Left ventricle myocardium superior (tissue), 1 donor: ENCODE measurements at regions of chr11 and their contacts with region 1.

Region 1: DNA sequence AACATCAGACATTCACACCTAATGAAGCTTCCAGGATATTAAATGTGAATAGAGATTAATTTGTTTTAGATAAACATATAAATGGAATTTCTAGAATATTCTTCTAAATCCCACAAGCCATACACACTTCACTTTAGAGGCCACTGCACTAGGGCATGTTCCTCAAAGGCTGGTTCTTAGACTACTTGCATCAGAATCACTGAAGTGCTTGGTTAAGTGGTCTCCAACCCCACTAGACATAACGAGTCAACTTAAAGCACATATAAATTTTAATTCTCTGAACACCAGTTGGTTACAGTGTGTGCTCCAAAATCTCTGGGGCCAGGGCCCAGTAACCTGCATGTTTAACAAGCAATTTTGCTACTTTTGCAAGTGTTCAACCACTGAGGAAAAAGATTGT is 7.9 kb upstream of the ALKBH8 start:
- DNase-seq: no peak
- ATAC-seq: no peak

Region 2: GRCh38 chr11:107689317-107690202 is 116.1 kb after region 1 on chr11:
- intact Hi-C with region 1: loop called (anchors 5 kb)
- DNase-seq: peak; percentile 60
- ATAC-seq: peak; percentile 85

Region 3: DNA sequence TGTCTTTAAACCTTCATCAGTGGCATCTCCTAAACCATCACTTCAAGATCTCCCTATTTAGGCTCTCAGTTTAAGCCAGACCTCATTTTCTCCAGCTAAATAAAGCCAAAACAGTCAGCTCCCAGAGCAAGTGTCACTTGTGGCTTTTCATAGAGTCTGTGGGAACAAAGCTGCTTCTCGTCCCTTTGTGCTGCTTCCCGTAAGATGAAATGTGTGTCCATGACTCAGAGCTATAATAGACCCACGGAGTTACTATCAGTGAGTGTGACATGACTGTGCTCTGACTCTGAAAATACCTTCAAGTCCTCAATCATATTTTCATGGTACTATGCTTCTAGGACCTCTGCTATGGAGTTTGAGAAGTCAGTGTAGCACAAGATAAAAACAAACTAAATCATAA is 195.8 kb after region 1 on chr11:
- intact Hi-C with region 1: loop called (anchors 10 kb)
- DNase-seq: no peak
- ATAC-seq: peak; percentile 30